ENCODE measurements at regions of chr5 and their contacts with region 1.

Region 1: GRCh38 chr5:96997265-96997859 is 61.5 kb downstream of the LNPEP start:
- DNase-seq: peak in 1 of 2 donors; percentile 13
- ATAC-seq: peak in 1 of 8 donors; percentile 58
- H3K4me3 ChIP-seq: no peak overlapping the region
- H3K27ac ChIP-seq: no peak overlapping the region
- H3K4me1 ChIP-seq: no peaks in the 10 kb centered on the region
- H3K27me3 ChIP-seq: no peaks in the 10 kb centered on the region
- CTCF ChIP-seq: peak; percentile 5 to 62 (median 50)

Region 2: GRCh38 chr5:96288166-96288844 is 709.1 kb before region 1 on chr5:
- intact Hi-C with region 1: no loop called
- DNase-seq: no peak
- ATAC-seq: no peak
- H3K4me3 ChIP-seq: no peak overlapping the region
- H3K27ac ChIP-seq: peak overlapping the region in 1 of 10 donors; percentile 10
- H3K4me1 ChIP-seq: peaks cover 0 to 13% (median 0%) of the 10 kb centered on the region in 9 donors
- H3K27me3 ChIP-seq: no peaks in the 10 kb centered on the region
- CTCF ChIP-seq: no peak

Region 3: DNA sequence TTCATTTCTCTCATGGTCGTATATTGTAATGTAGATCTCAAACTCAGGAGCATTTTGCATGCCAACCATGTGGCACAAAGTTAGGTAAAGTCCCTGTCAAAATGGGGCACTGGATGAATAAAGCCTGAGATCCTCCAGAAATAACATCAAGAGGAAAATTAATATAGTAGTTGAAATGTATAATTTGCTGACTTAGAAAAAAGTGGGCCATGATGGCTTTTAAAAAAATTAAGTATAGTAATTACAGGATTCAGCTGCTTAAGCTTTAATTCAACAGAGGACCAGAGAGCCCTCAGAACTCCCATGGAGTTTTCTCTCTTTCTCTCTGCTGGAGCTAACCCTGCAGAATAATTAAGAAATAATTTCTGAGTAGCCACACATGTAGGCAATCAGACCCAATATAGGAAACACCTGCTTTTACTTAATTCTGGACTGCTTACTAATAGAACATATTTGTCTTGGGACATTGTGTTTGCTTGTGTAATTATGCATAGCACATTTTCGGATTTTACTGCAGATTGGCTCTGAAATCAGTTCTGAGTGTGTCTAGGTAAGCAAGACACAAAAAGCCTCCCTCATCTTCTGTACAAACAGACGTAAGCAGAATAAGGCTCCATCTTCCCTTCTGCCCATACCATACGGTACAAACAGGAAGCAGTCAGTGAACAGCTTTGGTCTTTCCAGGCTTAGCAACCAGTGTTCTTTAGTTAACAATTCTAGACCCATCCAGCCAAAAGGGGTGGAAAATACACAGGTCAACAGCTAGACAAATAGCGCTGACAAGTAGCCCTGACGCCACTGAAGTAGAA is 537.8 kb before region 1 on chr5:
- intact Hi-C with region 1: no loop called
- DNase-seq: no peak
- ATAC-seq: no peak
- H3K4me3 ChIP-seq: no peak overlapping the region
- H3K27ac ChIP-seq: no peak overlapping the region
- H3K4me1 ChIP-seq: no peaks in the 10 kb centered on the region
- H3K27me3 ChIP-seq: peaks cover 0 to 6% (median 0%) of the 10 kb centered on the region in 7 donors
- CTCF ChIP-seq: no peak

Region 4: DNA sequence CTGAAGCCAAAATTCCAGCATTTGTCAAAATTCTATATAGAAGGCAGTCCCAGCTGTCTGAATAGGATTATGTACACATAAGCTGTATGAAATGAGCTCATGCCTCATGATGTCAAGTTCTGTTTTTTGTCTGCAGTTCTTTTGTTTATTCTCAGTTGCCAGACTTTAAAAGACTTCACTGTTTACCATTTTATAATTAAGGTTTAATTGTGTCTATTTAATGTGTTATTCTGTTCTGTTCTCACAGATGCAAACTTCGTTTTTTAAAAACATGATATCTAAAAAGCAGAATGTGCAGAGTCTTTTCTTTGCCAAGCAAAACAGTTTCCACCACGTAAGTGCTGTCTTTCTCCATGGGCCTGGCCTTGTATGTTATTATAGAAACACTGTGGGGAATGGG is 220.7 kb before region 1 on chr5:
- intact Hi-C with region 1: loop called in 1 of 10 experiments (anchors 10 kb)
- DNase-seq: no peak
- ATAC-seq: no peak
- H3K4me3 ChIP-seq: no peak overlapping the region
- H3K27ac ChIP-seq: no peak overlapping the region
- H3K4me1 ChIP-seq: peaks cover 0 to 40% (median 23%) of the 10 kb centered on the region in 9 donors
- H3K27me3 ChIP-seq: no peaks in the 10 kb centered on the region
- CTCF ChIP-seq: no peak

Region 5: GRCh38 chr5:96868603-96869371 is 128.6 kb before region 1 on chr5:
- intact Hi-C with region 1: loop called in 5 of 10 experiments (anchors 10 kb)
- DNase-seq: peak in 1 of 2 donors; percentile 36
- ATAC-seq: peak; percentile 67 to 92 (median 87)
- H3K4me3 ChIP-seq: no peak overlapping the region
- H3K27ac ChIP-seq: no peak overlapping the region
- H3K4me1 ChIP-seq: no peaks in the 10 kb centered on the region
- H3K27me3 ChIP-seq: no peaks in the 10 kb centered on the region
- CTCF ChIP-seq: peak; percentile 75 to 95 (median 86)

Region 6: DNA sequence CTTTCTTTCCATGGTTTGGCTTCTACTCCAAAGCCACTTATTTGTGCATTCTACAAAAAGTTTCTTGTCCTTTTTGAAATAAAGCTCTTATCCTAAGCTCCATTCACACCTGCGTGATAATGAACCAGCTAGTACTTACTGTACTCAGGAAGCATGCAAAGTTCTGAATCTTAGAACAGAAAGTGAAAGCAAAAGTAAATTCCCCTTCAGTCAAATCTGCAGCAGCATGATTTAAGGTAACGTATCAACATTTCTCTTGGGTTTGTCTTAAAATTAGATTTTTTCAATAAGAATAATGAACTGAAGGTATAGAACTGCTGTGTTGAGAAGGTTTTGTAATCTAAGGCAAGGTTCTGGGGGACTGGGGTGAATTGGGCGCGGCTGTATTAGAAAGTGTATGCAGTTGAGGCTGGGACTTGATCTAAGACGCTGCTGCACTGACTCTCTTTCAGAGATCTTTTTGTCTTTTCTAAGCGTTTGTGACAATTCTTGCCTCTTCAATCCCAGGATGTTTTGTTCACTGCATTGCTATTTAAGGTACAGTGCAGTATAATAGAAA is 121.0 kb before region 1 on chr5 and contains the start of gene ERAP2:
- intact Hi-C with region 1: loop called in 3 of 10 experiments (anchors 10 kb)
- DNase-seq: no peak
- ATAC-seq: peak in 7 of 8 donors; percentile 67 to 88 (median 81)
- H3K4me3 ChIP-seq: peak within 1 kb of the TSS; percentile 34 to 78 (median 67)
- H3K27ac ChIP-seq: peak within 1 kb of the TSS in 9 of 10 donors; percentile 57 to 90 (median 79)
- H3K4me1 ChIP-seq: peaks cover 0 to 49% (median 10%) of the 10 kb centered on the region in 9 donors
- H3K27me3 ChIP-seq: no peaks in the 10 kb centered on the region
- CTCF ChIP-seq: no peak
- total RNA-seq, gene ERAP2: 0.92 to 29.7 (median 5.9) TPM

Region 7: GRCh38 chr5:97019435-97020117 is 22.2 kb after region 1 on chr5:
- intact Hi-C with region 1: no loop called
- DNase-seq: no peak
- ATAC-seq: no peak
- H3K4me3 ChIP-seq: no peak overlapping the region
- H3K27ac ChIP-seq: no peak overlapping the region
- H3K4me1 ChIP-seq: no peaks in the 10 kb centered on the region
- H3K27me3 ChIP-seq: no peaks in the 10 kb centered on the region
- CTCF ChIP-seq: no peak

Measured in heart right ventricle (tissue), 16 donors.